Heart right ventricle (tissue), 16 donors: ENCODE measurements at regions of chr2 and their contacts with region 1.

Region 1: GRCh38 chr2:134431838-134432434 is 178.1 kb downstream of the MGAT5 start:
- DNase-seq: no peak
- ATAC-seq: no peak
- H3K4me3 ChIP-seq: no peak overlapping the region
- H3K27ac ChIP-seq: no peak overlapping the region
- H3K4me1 ChIP-seq: peaks cover 0 to 3% (median 0%) of the 10 kb centered on the region in 9 donors
- H3K27me3 ChIP-seq: no peaks in the 10 kb centered on the region
- CTCF ChIP-seq: no peak

Region 2: DNA sequence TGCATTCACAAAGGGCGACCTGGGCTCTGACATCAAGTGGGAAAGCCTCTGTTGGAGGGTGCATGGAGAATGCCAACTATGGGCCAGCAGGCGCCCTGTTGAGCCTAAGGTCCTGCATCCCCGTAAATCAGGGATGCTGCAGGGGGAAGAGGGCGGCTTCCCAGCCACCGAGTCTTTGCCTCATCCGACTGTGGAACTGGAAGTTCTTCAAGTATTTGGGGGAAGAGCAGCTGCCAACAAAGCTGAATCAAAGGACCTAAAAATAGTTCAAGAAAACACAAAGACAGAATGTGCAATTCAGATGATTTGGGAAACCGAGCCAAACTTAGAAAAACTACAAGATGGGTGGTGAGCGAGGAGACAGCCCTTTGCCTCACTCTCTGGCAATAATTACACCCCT is 459.1 kb before region 1 on chr2:
- intact Hi-C with region 1: loop called in 1 of 10 experiments (anchors 10 kb)
- DNase-seq: no peak
- ATAC-seq: peak in 5 of 8 donors; percentile 29 to 73 (median 45)
- H3K4me3 ChIP-seq: no peak overlapping the region
- H3K27ac ChIP-seq: peak overlapping the region in 1 of 10 donors; percentile 39
- H3K4me1 ChIP-seq: peaks cover 0 to 49% (median 13%) of the 10 kb centered on the region in 9 donors
- H3K27me3 ChIP-seq: no peaks in the 10 kb centered on the region
- CTCF ChIP-seq: no peak

Region 3: DNA sequence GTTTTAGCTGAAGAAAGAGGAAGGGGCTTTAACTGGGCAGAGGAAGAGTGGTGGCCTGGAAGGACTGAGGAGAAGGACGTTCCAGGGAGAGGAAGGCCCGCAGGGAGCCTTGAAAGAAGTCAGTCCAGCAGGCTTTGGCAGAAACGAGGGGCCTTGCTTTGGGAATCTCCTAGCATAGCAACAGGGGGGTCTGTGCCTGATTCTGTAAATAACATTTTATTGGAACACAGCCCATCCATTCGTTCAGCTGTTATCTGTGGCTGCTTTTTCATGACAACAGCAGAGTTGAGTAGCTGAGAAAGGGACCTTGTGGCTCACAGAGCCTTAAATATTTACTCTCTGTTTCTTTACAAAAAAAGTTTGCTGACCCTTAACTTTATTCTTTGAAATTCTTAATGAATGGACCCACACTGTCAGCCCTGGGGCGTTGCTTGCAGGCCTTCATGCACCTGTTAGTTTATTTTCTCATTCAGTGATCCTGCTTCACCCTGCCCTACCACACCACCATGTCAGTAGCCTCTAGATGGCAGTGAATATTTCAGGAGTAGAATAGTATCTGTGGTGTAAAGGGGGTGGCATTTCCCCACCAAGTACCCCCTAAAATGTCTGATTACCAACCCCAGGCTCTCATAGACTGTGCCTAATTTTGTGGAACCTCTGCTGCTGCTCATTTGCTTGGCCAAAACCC is 117.1 kb before region 1 on chr2:
- intact Hi-C with region 1: no loop called
- DNase-seq: peak; percentile 14 to 31
- ATAC-seq: peak; percentile 28 to 62 (median 44)
- H3K4me3 ChIP-seq: no peak overlapping the region
- H3K27ac ChIP-seq: peak overlapping the region in 9 of 10 donors; percentile 13 to 69 (median 49)
- H3K4me1 ChIP-seq: peaks cover 8 to 74% (median 39%) of the 10 kb centered on the region in 9 donors
- H3K27me3 ChIP-seq: no peaks in the 10 kb centered on the region
- CTCF ChIP-seq: peak in 3 of 9 donors; percentile 19 to 27 (median 23)

Region 4: GRCh38 chr2:134468164-134468563 is 36.2 kb after region 1 on chr2:
- intact Hi-C with region 1: no loop called
- DNase-seq: no peak
- ATAC-seq: no peak
- H3K4me3 ChIP-seq: no peak overlapping the region
- H3K27ac ChIP-seq: no peak overlapping the region
- H3K4me1 ChIP-seq: no peaks in the 10 kb centered on the region
- H3K27me3 ChIP-seq: no peaks in the 10 kb centered on the region
- CTCF ChIP-seq: no peak